ENCODE measurements at regions of chr3 and their contacts with region 1.

Region 1: DNA sequence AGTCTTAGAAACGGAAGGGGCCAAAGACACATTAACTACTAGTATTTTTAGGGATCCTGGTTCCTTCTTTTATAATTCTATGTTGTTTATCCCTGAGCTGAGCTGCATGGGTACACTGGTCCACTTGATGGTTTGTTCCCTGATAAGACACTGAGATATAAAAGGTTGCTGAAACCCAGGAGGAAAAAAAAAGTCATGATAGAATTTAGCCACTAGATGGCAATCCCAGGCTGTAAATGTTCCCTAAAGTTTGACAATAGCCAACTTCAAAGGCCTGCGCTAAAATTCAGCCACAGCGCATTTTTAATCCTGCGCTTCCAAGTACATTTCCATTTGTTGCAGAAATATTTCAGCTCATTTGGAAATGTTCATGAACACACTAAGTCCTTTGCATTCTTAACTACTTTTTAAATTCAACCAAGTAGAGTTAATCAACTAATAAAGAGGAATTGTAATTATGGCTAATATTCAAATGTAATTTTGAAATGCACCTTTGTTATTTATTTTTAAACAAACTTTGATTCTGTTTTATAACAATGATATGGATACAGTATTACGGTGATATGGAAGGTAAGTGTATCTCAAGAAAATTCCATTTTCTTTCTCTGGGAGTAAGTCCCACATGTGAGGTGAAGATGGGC is 249.3 kb upstream of the FEZF2 start:
- DNase-seq: peak; percentile 68
- H3K4me3 Mint-ChIP-seq: no peak overlapping the region
- H3K27ac Mint-ChIP-seq: no peak overlapping the region
- H3K4me1 Mint-ChIP-seq: peaks cover 6% of the 10 kb centered on the region
- H3K27me3 Mint-ChIP-seq: no peaks in the 10 kb centered on the region
- CTCF ChIP-seq: peak; percentile 64

Region 2: DNA sequence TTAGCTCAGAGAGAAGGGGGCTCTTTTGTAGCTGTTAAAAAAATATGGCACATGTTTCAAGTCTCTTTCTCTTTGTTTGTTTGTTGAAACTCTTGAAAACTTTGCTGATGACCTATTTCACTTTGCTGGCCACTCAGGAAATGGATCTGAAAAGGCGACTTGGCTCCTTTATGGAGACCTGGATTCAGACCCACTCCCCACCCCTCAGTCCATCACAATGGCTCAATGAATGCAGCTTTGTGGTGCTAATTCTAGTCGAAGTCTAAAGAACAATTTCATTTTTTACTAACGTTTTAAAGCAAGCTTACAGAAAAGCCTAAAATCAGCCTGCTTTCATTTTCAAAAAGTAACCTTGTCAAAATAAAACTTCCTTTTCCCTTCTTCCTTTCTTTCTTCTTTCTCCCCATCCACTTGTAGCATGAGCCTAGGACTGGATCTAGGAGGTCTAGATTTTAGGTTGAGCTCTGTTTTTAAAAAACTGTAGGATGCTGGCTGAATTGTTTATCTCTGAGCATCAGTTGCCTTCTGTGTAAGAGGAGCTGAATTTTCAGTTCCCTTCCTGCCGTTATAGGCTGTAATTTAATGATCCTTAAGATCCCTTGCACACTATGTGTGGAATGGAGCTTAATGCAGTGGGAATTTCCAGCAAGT is 83.8 kb before region 1 on chr3:
- CTCF ChIA-PET with region 1: no interaction called
- POLR2A ChIA-PET with region 1: no interaction called
- intact Hi-C with region 1: no loop called
- DNase-seq: no peak
- H3K4me3 Mint-ChIP-seq: no peak overlapping the region
- H3K27ac Mint-ChIP-seq: no peak overlapping the region
- H3K4me1 Mint-ChIP-seq: no peaks in the 10 kb centered on the region
- H3K27me3 Mint-ChIP-seq: peaks cover 99% of the 10 kb centered on the region
- CTCF ChIP-seq: no peak

Region 3: GRCh38 chr3:62558549-62559112 is 64.0 kb before region 1 on chr3:
- CTCF ChIA-PET with region 1: no interaction called
- POLR2A ChIA-PET with region 1: no interaction called
- intact Hi-C with region 1: loop called (anchors 2 kb)
- DNase-seq: peak; percentile 48
- H3K4me3 Mint-ChIP-seq: no peak overlapping the region
- H3K27ac Mint-ChIP-seq: no peak overlapping the region
- H3K4me1 Mint-ChIP-seq: peaks cover 13% of the 10 kb centered on the region
- H3K27me3 Mint-ChIP-seq: no peaks in the 10 kb centered on the region
- CTCF ChIP-seq: peak; percentile 45

Region 4: DNA sequence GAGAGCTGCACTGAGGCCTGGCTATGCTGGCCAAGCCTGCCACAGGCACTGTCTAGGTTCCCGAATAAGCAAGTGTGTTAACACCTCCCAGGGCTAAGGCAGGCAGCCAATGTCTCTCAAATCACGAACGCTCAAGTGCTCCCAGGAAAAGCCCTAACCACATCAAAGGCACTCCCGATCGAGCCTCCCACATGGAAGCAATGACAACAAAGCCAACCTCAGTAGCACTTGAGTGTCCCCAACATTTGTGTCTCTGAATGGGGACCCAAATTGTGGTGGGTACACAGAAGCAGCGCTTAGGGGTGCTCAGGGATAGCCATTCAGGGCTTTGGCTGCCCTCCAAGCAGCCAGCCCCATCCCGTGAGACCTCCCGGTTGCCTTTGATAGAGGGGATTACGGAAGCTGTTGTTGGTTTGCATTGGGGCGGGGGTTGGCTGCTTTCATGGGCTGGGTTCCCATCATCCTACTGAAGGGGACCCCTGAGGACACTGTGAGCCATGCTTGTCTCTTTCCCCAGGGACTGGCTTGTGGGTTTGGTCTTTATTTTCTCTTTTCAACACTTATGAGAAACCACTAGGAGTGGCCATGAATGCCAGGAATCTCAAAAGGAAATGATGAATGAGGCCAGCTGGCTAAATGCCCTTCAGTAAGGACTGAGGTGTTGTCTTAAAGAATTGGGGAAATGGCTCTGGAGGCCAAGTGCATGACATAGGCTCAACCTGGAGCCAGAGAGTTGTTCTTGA is 15.2 kb before region 1 on chr3:
- CTCF ChIA-PET with region 1: interaction called, 31 read pairs
- POLR2A ChIA-PET with region 1: interaction called, 4 read pairs
- intact Hi-C with region 1: no loop called
- DNase-seq: peak; percentile 98
- H3K4me3 Mint-ChIP-seq: peak overlapping the region; percentile 44
- H3K27ac Mint-ChIP-seq: peak overlapping the region; percentile 82
- H3K4me1 Mint-ChIP-seq: peaks cover 60% of the 10 kb centered on the region
- H3K27me3 Mint-ChIP-seq: no peaks in the 10 kb centered on the region
- CTCF ChIP-seq: no peak

Region 5: GRCh38 chr3:62638316-62638715 is 15.6 kb after region 1 on chr3:
- CTCF ChIA-PET with region 1: interaction called, 16 read pairs
- POLR2A ChIA-PET with region 1: no interaction called
- intact Hi-C with region 1: no loop called
- DNase-seq: no peak
- H3K4me3 Mint-ChIP-seq: no peak overlapping the region
- H3K27ac Mint-ChIP-seq: no peak overlapping the region
- H3K4me1 Mint-ChIP-seq: peaks cover 6% of the 10 kb centered on the region
- H3K27me3 Mint-ChIP-seq: no peaks in the 10 kb centered on the region
- CTCF ChIP-seq: no peak

Region 6: DNA sequence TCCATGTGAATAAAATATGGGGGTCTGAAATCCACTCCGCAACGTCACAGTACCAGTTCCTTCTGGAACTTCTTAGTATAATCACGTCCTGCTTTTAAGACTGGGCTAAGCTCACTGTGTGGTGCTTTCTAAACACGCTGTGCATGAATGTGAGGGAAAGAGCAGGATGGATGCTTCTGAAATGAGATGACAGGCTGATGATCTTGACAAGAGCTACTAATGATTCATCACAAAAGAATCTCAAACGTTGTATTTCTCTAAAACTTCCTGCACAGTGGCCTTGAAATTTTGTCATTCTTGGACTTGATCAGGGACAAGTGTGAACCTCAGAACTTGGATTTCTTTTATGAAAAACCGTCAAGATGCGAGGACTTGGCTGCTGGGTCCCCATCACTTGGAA is 31.1 kb after region 1 on chr3:
- CTCF ChIA-PET with region 1: interaction called, 11 read pairs
- POLR2A ChIA-PET with region 1: no interaction called
- intact Hi-C with region 1: no loop called
- DNase-seq: no peak
- H3K4me3 Mint-ChIP-seq: no peak overlapping the region
- H3K27ac Mint-ChIP-seq: no peak overlapping the region
- H3K4me1 Mint-ChIP-seq: no peaks in the 10 kb centered on the region
- H3K27me3 Mint-ChIP-seq: no peaks in the 10 kb centered on the region
- CTCF ChIP-seq: no peak

Region 7: GRCh38 chr3:62803276-62803675 is 180.6 kb after region 1 on chr3:
- CTCF ChIA-PET with region 1: no interaction called
- POLR2A ChIA-PET with region 1: no interaction called
- intact Hi-C with region 1: no loop called
- DNase-seq: peak; percentile 16
- H3K4me3 Mint-ChIP-seq: no peak overlapping the region
- H3K27ac Mint-ChIP-seq: no peak overlapping the region
- H3K4me1 Mint-ChIP-seq: no peaks in the 10 kb centered on the region
- H3K27me3 Mint-ChIP-seq: no peaks in the 10 kb centered on the region
- CTCF ChIP-seq: no peak

Region 8: GRCh38 chr3:62922086-62922725 is 299.5 kb after region 1 on chr3:
- CTCF ChIA-PET with region 1: no interaction called
- POLR2A ChIA-PET with region 1: no interaction called
- intact Hi-C with region 1: no loop called
- DNase-seq: peak; percentile 22
- H3K4me3 Mint-ChIP-seq: no peak overlapping the region
- H3K27ac Mint-ChIP-seq: no peak overlapping the region
- H3K4me1 Mint-ChIP-seq: peaks cover 16% of the 10 kb centered on the region
- H3K27me3 Mint-ChIP-seq: peaks cover 58% of the 10 kb centered on the region
- CTCF ChIP-seq: no peak

Region 9: GRCh38 chr3:63142676-63143075 is 520.0 kb after region 1 on chr3:
- CTCF ChIA-PET with region 1: no interaction called
- POLR2A ChIA-PET with region 1: no interaction called
- intact Hi-C with region 1: no loop called
- DNase-seq: no peak
- H3K4me3 Mint-ChIP-seq: no peak overlapping the region
- H3K27ac Mint-ChIP-seq: no peak overlapping the region
- H3K4me1 Mint-ChIP-seq: no peaks in the 10 kb centered on the region
- H3K27me3 Mint-ChIP-seq: peaks cover 28% of the 10 kb centered on the region
- CTCF ChIP-seq: no peak

Region 10: GRCh38 chr3:63193629-63194028 is 571.0 kb after region 1 on chr3:
- CTCF ChIA-PET with region 1: interaction called, 18 read pairs
- POLR2A ChIA-PET with region 1: no interaction called
- intact Hi-C with region 1: loop called (anchors 1 kb)
- DNase-seq: peak; percentile 26
- H3K4me3 Mint-ChIP-seq: no peak overlapping the region
- H3K27ac Mint-ChIP-seq: no peak overlapping the region
- H3K4me1 Mint-ChIP-seq: no peaks in the 10 kb centered on the region
- H3K27me3 Mint-ChIP-seq: peaks cover 64% of the 10 kb centered on the region
- CTCF ChIP-seq: peak; percentile 52

Region 11: GRCh38 chr3:63333842-63334241 is 711.2 kb after region 1 on chr3:
- CTCF ChIA-PET with region 1: interaction called, 39 read pairs
- POLR2A ChIA-PET with region 1: no interaction called
- intact Hi-C with region 1: loop called (anchors 2 kb)
- DNase-seq: peak; percentile 16
- H3K4me3 Mint-ChIP-seq: no peak overlapping the region
- H3K27ac Mint-ChIP-seq: no peak overlapping the region
- H3K4me1 Mint-ChIP-seq: no peaks in the 10 kb centered on the region
- H3K27me3 Mint-ChIP-seq: peaks cover 70% of the 10 kb centered on the region
- CTCF ChIP-seq: peak; percentile 23